ENCODE measurements at regions of chr10 and their contacts with region 1.

Region 1: GRCh38 chr10:110233846-110234245 is 26.4 kb downstream of the MXI1 start:
- DNase-seq: no peak
- ATAC-seq: no peak

Region 2: DNA sequence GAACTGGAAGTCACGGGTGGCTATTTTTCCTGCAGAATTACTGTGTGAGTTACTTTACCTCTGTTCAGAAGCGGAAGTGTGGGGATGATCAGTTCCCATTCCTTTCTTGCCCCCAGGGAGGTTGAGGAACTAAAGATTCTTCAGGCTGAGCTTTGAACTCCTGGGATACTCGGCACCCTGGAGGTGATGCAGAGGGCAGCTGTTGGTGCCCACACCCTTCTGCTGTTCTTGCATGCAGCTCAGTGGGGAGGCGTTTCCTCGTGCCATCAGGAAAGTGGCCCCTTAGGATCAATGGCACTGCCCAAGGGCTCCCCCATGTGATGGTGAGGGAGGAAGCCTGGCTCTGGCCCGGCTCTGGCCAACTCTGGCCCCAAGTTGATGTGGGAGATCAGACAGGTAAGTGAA is 71.1 kb before region 1 on chr10:
- intact Hi-C with region 1: no loop called
- DNase-seq: no peak
- ATAC-seq: no peak

Region 3: GRCh38 chr10:110279407-110279986 is 45.7 kb after region 1 on chr10:
- intact Hi-C with region 1: loop called (anchors 5 kb)
- DNase-seq: no peak
- ATAC-seq: peak; percentile 78